ENCODE measurements at regions of chr7 and their contacts with region 1.

Region 1: DNA sequence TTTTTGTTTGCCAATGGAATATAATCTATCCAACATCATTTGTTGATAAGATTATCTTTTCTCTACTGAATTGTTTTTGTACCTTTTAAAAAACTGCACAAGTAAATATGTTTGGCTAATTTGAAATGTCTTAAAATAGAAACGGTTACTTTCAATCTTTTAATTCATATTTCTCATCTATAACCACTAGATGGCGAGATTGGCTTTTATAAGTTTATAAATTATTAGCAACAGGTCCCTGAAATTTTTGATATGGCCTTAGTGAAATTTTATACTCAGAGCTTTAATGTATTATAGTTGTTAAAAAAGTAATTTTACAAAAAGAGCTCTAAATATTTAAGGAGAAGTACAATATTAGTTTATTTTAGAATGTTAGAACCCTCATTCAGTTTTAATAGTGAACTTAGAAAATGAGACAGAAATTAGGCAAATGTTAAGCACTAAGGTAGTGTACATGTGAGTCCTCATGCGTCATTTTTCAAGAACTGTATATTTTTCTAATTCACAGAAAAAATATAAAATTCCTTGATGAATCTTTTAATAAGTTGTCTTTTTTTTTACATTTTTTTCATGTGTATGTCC is 592.5 kb downstream of the ARL4A start:
- DNase-seq: no peak
- H3K4me3 ChIP-seq: no peak overlapping the region
- H3K27ac ChIP-seq: no peak overlapping the region
- H3K4me1 ChIP-seq: no peaks in the 10 kb centered on the region
- H3K27me3 ChIP-seq: no peaks in the 10 kb centered on the region
- CTCF ChIP-seq: peak; percentile 30 to 57 (median 45)
- EP300 ChIP-seq: no peak
- POLR2A ChIP-seq: no peak

Region 2: GRCh38 chr7:13457790-13458189 is 177.8 kb after region 1 on chr7:
- in situ Hi-C with region 1: no loop called
- intact Hi-C with region 1: no loop called
- DNase-seq: no peak
- H3K4me3 ChIP-seq: no peak overlapping the region
- H3K27ac ChIP-seq: no peak overlapping the region
- H3K4me1 ChIP-seq: no peaks in the 10 kb centered on the region
- H3K27me3 ChIP-seq: no peaks in the 10 kb centered on the region
- CTCF ChIP-seq: no peak
- EP300 ChIP-seq: no peak
- POLR2A ChIP-seq: no peak

Region 3: DNA sequence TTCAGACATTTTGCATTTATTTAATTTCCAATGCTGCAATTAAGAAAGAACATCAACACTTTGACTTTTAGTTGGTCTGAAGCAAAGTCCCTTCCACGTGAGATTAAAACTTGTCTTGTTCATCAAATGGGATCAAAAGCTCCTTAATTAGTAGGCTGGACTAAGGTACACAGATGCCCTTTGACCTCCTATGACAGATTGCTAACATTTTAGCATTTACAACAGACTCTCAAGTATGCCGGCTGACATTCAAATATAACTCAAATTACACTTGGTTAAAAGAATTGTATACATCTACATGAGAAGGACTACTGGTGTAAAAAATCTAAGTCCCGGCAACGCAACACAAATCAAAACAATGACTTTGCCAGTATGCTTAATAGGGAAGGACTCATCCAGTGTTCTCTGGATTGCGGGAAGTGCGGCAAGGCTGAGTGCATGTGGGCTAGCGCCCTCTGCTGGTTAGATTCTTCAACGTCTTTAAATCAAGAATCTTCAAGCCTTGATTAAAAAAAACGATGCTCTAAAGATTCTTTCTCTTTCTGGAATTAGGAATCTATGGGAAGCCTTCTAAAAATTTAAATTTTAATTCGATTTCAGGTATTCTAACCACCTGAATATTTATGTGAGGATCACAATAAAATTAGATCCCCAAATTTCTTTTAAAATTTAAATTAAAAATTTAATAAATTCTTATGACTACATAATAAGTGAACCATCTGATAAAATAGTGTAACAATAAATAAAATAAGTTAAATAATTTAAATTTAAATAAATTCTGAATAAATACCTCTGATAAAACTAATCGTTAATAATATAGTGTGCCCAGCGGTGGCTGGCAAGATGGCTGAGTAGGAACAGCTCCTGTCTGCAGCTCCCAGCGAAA is 1177.9 kb after region 1 on chr7:
- in situ Hi-C with region 1: loop called (anchors 10 to 25 kb)
- intact Hi-C with region 1: loop called (anchors 10 kb)
- DNase-seq: peak; percentile 67
- H3K4me3 ChIP-seq: no peak overlapping the region
- H3K27ac ChIP-seq: no peak overlapping the region
- H3K4me1 ChIP-seq: peaks cover 0 to 3% (median 0%) of the 10 kb centered on the region in 4 donors
- H3K27me3 ChIP-seq: no peaks in the 10 kb centered on the region
- CTCF ChIP-seq: peak; percentile 71 to 86 (median 81)
- EP300 ChIP-seq: no peak
- POLR2A ChIP-seq: no peak

Region 4: DNA sequence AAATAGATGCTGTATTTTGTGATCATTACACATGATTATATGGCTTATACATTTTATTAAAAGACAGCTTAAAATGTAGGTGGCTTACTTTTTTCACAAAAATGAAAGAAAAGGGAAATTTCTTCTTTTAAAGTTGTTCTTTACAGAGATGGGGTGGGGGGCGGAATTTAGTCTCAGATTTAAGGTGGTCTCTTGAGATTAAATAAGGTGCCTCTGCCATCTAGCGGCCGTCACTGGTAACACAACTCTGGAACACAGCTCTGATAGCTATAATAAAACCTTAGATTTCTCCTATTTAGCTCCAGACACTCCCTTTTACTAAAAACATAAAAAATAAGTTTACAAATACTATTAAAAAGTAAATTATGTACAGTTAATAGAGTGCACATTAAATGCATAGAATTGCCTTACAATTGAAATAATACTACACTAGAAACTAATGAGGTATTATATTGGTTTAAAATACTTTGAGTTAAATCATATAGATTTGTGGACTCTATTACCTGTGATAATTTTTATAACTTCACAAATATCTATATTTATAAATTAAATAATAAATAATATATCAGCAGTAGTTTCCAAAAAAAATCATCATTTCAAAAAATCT is 1411.8 kb after region 1 on chr7:
- in situ Hi-C with region 1: loop called (anchors 5 to 25 kb)
- intact Hi-C with region 1: loop called (anchors 10 kb)
- DNase-seq: peak; percentile 41
- H3K4me3 ChIP-seq: no peak overlapping the region
- H3K27ac ChIP-seq: no peak overlapping the region
- H3K4me1 ChIP-seq: peaks cover 0 to 4% (median 0%) of the 10 kb centered on the region in 4 donors
- H3K27me3 ChIP-seq: no peaks in the 10 kb centered on the region
- CTCF ChIP-seq: peak; percentile 70 to 88 (median 83)
- EP300 ChIP-seq: no peak
- POLR2A ChIP-seq: no peak

Measured in transverse colon (tissue), 4 donors.